Heart left ventricle (tissue), 16 donors: ENCODE measurements at regions of chr1 and their contacts with region 1.

Region 1: DNA sequence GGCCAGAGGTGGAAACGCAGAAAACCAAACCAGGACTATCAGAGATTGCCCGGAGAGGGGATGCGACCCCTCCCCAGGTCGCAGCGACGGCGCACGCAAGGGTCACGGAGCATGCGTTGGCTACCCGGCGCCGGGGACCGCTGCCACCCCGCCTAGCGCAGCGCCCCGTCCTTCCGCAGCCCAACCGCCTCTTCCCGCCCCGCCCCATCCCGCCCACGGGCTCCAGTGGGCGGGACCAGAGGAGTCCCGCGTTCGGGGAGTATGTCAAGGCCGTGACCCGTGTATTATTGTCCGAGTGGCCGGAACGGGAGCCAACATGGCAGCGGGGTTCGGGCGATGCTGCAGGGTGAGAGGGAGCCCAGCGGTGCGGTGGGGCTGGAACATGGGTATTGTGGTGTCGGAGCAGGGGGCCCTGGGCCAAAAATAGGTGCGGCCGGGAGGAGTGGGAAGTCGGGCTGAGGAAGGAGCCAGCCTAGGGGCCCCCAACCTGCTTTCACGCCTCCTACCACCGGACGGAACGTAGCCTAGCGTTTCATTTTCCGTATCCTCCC is at the start of gene ACADM:
- DNase-seq: peak; percentile 91 to 95 (median 93)
- ATAC-seq: peak; percentile 97 to 99 (median 99)
- H3K4me3 ChIP-seq: peak within 1 kb of the TSS; percentile 62 to 89 (median 82)
- H3K27ac ChIP-seq: peak within 1 kb of the TSS; percentile 79 to 98 (median 94)
- H3K4me1 ChIP-seq: peaks cover 0 to 32% (median 21%) of the 10 kb centered on the region in 12 donors
- H3K27me3 ChIP-seq: no peaks in the 10 kb centered on the region
- CTCF ChIP-seq: peak in 1 of 12 donors; percentile 2
- POLR2A ChIP-seq: peak in 1 of 2 donors; percentile 83
- total RNA-seq, gene ACADM: 149 to 371 (median 253) TPM

Region 2: GRCh38 chr1:75765697-75766355 is 41.3 kb after region 1 on chr1:
- intact Hi-C with region 1: no loop called
- DNase-seq: no peak
- ATAC-seq: peak in 1 of 4 donors; percentile 43
- H3K4me3 ChIP-seq: no peak overlapping the region
- H3K27ac ChIP-seq: no peak overlapping the region
- H3K4me1 ChIP-seq: no peaks in the 10 kb centered on the region
- H3K27me3 ChIP-seq: no peaks in the 10 kb centered on the region
- CTCF ChIP-seq: no peak
- POLR2A ChIP-seq: no peak

Region 3: DNA sequence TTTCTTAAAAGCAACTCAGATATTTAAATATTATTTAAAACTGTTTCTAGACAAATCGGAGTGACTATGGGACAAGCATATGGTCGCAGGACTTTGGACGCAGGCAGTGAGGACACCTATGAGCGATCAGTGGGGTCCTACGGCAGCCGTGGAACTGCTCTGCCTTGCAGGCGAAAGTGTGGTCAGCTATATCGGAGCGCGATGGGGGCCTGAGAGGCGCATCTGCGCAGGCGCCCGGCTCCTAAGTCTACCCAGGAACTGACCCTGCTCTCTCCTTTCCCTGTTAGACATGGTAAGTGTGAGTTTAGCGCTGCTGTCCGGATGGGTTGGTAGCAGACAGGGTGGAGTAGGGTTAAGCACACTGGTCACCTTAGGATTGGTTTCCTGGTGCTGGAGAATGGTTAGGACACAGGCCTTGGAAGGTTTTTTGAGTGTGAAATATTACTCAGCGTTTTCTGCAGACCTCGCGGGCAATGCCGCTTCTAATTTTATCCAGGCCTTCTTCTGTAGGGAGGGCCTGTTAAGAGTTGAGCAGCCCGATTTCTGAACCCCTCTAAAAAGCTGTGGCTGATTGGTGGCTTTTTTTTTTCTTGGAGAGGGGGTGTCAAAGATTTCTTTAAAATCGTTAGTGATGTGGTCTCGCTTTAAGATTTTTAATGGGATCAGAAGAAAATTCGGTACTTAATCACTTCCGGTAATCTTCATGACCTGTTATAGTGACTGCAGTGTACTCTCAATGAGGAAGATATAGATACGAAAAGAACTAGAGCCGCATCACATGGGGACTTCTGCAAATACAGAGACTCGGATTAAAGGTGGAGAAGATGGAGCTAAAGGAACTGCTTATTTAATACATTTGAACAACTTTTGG is 61.7 kb after region 1 on chr1 and contains the start of gene RABGGTB:
- intact Hi-C with region 1: loop called in 9 of 10 experiments (anchors 1 to 5 kb)
- DNase-seq: peak; percentile 93 to 96 (median 96)
- ATAC-seq: peak; percentile 97 to 100 (median 99)
- H3K4me3 ChIP-seq: peak within 1 kb of the TSS; percentile 50 to 86 (median 77)
- H3K27ac ChIP-seq: peak within 1 kb of the TSS; percentile 59 to 92 (median 86)
- H3K4me1 ChIP-seq: peaks cover 0 to 54% (median 40%) of the 10 kb centered on the region in 12 donors
- H3K27me3 ChIP-seq: no peaks in the 10 kb centered on the region
- CTCF ChIP-seq: no peak
- POLR2A ChIP-seq: peak in 1 of 2 donors; percentile 88
- total RNA-seq, gene RABGGTB: 30.7 to 67.4 (median 55.1) TPM